CD4-positive, alpha-beta T cell (primary cell): ENCODE measurements at regions of chr1 and their contacts with region 1.

Region 1: GRCh38 chr1:184982002-184982954 is 8.0 kb upstream of the NIBAN1 start:
- DNase-seq: peak; percentile 56 to 87 (median 66)
- ATAC-seq: peak; percentile 96
- H3K4me3 ChIP-seq: no peak overlapping the region
- H3K4me3 Mint-ChIP-seq: no peak overlapping the region
- H3K27ac ChIP-seq: no peak overlapping the region
- H3K27ac Mint-ChIP-seq: no peak overlapping the region
- H3K4me1 ChIP-seq: peaks cover 3% of the 10 kb centered on the region
- H3K4me1 Mint-ChIP-seq: no peaks in the 10 kb centered on the region
- H3K27me3 ChIP-seq: peaks cover 0 to 3% of the 10 kb centered on the region in 2 experiments
- H3K27me3 Mint-ChIP-seq: peaks cover 4% of the 10 kb centered on the region
- CTCF ChIP-seq: peak; percentile 89

Region 2: GRCh38 chr1:184075055-184076029 is 906.9 kb before region 1 on chr1:
- CTCF ChIA-PET with region 1: no interaction called
- POLR2A ChIA-PET with region 1: no interaction called
- intact Hi-C with region 1: loop called (anchors 5 kb)
- DNase-seq: peak in 4 of 14 experiments; percentile 19 to 53 (median 50)
- ATAC-seq: peak; percentile 34
- H3K4me3 ChIP-seq: no peak overlapping the region
- H3K4me3 Mint-ChIP-seq: no peak overlapping the region
- H3K27ac ChIP-seq: no peak overlapping the region
- H3K27ac Mint-ChIP-seq: peak overlapping the region; percentile 25
- H3K4me1 ChIP-seq: no peaks in the 10 kb centered on the region
- H3K4me1 Mint-ChIP-seq: no peaks in the 10 kb centered on the region
- H3K27me3 ChIP-seq: no peaks in the 10 kb centered on the region
- H3K27me3 Mint-ChIP-seq: no peaks in the 10 kb centered on the region
- CTCF ChIP-seq: peak; percentile 56

Region 3: DNA sequence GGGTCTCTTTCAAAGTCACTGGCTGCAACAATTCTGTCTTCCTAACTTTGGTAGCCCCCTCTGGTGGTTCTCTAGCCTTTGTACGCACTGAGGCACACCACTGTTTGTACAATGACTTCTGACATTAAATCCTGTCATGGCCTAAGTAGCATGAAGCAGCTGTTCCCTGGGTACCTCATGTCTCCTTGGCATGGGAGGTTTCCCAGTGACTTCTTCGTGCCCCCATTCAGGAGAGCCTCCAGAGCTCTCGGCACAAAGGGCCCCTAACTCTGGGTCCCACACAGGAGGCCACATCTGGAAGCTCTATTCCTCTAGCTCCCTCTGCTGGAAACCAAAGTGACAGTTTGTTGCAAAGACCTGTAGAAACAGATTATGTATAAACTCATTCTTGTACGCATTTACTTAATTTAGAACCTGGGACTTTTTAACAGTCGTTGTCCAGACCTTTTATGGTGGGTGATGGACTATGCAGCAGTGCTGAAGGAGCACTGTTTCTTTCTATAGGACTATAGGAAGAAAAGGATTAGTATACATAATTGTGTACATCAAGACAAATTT is 188.1 kb after region 1 on chr1:
- CTCF ChIA-PET with region 1: no interaction called
- POLR2A ChIA-PET with region 1: no interaction called
- intact Hi-C with region 1: loop called in 1 of 2 experiments (anchors 5 kb)
- DNase-seq: peak in 10 of 14 experiments; percentile 3 to 74 (median 26)
- ATAC-seq: peak; percentile 87
- H3K4me3 ChIP-seq: no peak overlapping the region
- H3K4me3 Mint-ChIP-seq: no peak overlapping the region
- H3K27ac ChIP-seq: no peak overlapping the region
- H3K27ac Mint-ChIP-seq: no peak overlapping the region
- H3K4me1 ChIP-seq: peaks cover 2% of the 10 kb centered on the region
- H3K4me1 Mint-ChIP-seq: peaks cover 10% of the 10 kb centered on the region
- H3K27me3 ChIP-seq: no peaks in the 10 kb centered on the region
- H3K27me3 Mint-ChIP-seq: no peaks in the 10 kb centered on the region
- CTCF ChIP-seq: peak; percentile 80

Region 4: GRCh38 chr1:185694081-185694480 is 711.8 kb after region 1 on chr1:
- CTCF ChIA-PET with region 1: no interaction called
- POLR2A ChIA-PET with region 1: no interaction called
- intact Hi-C with region 1: loop called in 1 of 2 experiments (anchors 5 kb)
- DNase-seq: peak in 5 of 14 experiments; percentile 6 to 64 (median 63)
- ATAC-seq: peak; percentile 44
- H3K4me3 ChIP-seq: peak overlapping the region; percentile 46
- H3K4me3 Mint-ChIP-seq: peak overlapping the region; percentile 78
- H3K27ac ChIP-seq: peak overlapping the region; percentile 45 to 66
- H3K27ac Mint-ChIP-seq: peak overlapping the region; percentile 84
- H3K4me1 ChIP-seq: peaks cover 9% of the 10 kb centered on the region
- H3K4me1 Mint-ChIP-seq: peaks cover 23% of the 10 kb centered on the region
- H3K27me3 ChIP-seq: no peaks in the 10 kb centered on the region
- H3K27me3 Mint-ChIP-seq: peaks cover 5% of the 10 kb centered on the region
- CTCF ChIP-seq: no peak